ENCODE measurements at regions of chr7 and their contacts with region 1.

Region 1: GRCh38 chr7:107173691-107174406 is 5.0 kb downstream of the HBP1 start:
- DNase-seq: no peak
- H3K4me3 ChIP-seq: no peak overlapping the region
- H3K4me3 Mint-ChIP-seq: peak overlapping the region in 7 of 8 donors; percentile 25 to 71 (median 64)
- H3K27ac ChIP-seq: peak overlapping the region; percentile 3
- H3K27ac Mint-ChIP-seq: peak overlapping the region in 4 of 7 donors; percentile 12 to 87 (median 64)
- H3K4me1 ChIP-seq: peaks cover 74% of the 10 kb centered on the region
- H3K4me1 Mint-ChIP-seq: peaks cover 44 to 81% (median 57%) of the 10 kb centered on the region in 4 donors
- H3K27me3 ChIP-seq: no peaks in the 10 kb centered on the region
- H3K27me3 Mint-ChIP-seq: no peaks in the 10 kb centered on the region

Region 2: GRCh38 chr7:107090457-107090856 is 83.4 kb before region 1 on chr7:
- CTCF ChIA-PET with region 1: no interaction called
- POLR2A ChIA-PET with region 1: no interaction called
- intact Hi-C with region 1: no loop called
- DNase-seq: no peak
- H3K4me3 ChIP-seq: no peak overlapping the region
- H3K4me3 Mint-ChIP-seq: no peak overlapping the region
- H3K27ac ChIP-seq: no peak overlapping the region
- H3K27ac Mint-ChIP-seq: no peak overlapping the region
- H3K4me1 ChIP-seq: no peaks in the 10 kb centered on the region
- H3K4me1 Mint-ChIP-seq: peaks cover 0 to 3% (median 0%) of the 10 kb centered on the region in 4 donors
- H3K27me3 ChIP-seq: no peaks in the 10 kb centered on the region
- H3K27me3 Mint-ChIP-seq: peaks cover 3 to 4% of the 10 kb centered on the region in 2 donors

Region 3: DNA sequence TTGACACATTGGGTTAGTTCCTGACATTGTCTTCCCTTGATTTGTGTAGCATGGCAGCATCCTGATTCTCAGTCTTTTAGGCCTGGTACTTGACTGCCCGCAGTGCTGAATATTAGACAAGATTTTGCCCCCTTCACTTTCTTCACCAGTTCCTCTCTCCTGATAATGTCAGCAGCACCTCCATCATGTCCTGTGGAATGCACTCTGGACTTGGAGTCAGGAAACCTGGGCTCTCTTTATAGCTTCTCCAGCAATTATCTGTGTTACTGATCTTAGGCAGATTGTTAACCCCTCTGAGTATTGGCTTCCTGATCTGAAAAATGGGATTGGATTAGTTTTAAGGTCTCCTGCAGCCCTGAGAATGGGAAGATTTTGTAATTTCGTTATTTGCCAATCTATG is 13.9 kb after region 1 on chr7:
- CTCF ChIA-PET with region 1: interaction called, 3 read pairs
- POLR2A ChIA-PET with region 1: interaction called, 70 read pairs
- intact Hi-C with region 1: loop called (anchors 2 kb)
- DNase-seq: no peak
- H3K4me3 ChIP-seq: no peak overlapping the region
- H3K4me3 Mint-ChIP-seq: no peak overlapping the region
- H3K27ac ChIP-seq: no peak overlapping the region
- H3K27ac Mint-ChIP-seq: peak overlapping the region in 4 of 7 donors; percentile 2 to 51 (median 20)
- H3K4me1 ChIP-seq: no peaks in the 10 kb centered on the region
- H3K4me1 Mint-ChIP-seq: peaks cover 16 to 21% (median 19%) of the 10 kb centered on the region in 4 donors
- H3K27me3 ChIP-seq: no peaks in the 10 kb centered on the region
- H3K27me3 Mint-ChIP-seq: no peaks in the 10 kb centered on the region

Region 4: DNA sequence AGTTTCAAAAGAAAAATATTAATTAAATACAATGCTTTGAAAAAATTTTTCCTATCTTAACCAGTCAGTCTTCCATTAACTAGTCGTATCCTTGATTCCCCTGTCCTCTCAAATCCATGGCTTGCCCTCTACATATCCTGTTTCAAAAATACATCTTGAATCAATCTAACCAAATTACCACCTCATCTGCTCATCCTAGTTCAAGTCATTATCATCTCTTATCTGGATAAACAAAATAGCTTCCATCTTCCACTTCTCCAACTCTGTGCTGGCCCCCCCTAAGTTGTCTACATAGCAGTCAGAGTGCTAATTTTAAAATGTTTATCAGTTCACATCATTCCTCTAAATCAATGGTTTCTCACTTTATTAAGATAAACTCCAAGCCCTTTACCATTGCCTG is 120.3 kb after region 1 on chr7:
- CTCF ChIA-PET with region 1: no interaction called
- POLR2A ChIA-PET with region 1: no interaction called
- intact Hi-C with region 1: no loop called
- DNase-seq: no peak
- H3K4me3 ChIP-seq: no peak overlapping the region
- H3K4me3 Mint-ChIP-seq: no peak overlapping the region
- H3K27ac ChIP-seq: no peak overlapping the region
- H3K27ac Mint-ChIP-seq: no peak overlapping the region
- H3K4me1 ChIP-seq: no peaks in the 10 kb centered on the region
- H3K4me1 Mint-ChIP-seq: no peaks in the 10 kb centered on the region
- H3K27me3 ChIP-seq: no peaks in the 10 kb centered on the region
- H3K27me3 Mint-ChIP-seq: no peaks in the 10 kb centered on the region

Measured in CD4-positive, alpha-beta memory T cell (primary cell).